Activated CD4-positive, alpha-beta memory T cell treated with anti-CD3 and anti-CD28 coated beads for 36 hours (primary cell): ENCODE measurements at regions of chr3 and their contacts with region 1.

Region 1: DNA sequence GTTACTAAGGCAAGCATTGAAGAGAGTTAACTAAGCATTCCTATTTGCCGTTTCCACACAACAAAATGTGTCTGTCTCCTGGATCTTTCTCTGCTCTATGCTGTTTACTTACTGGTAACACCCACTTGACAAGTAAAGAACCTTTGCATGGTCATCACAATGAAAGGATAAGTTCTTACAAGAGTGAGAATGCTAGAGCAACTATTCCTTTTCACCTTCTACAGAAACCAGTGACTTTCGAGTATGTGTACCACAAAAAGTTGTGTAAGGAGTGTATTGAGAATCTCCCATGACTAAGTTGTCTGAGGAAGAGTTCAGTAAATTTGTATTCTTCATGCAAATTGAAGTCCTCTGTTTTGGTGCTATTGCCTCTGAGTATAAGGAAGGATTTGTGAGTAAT is 10.8 kb downstream of the TIPARP start:
- DNase-seq: no peak
- H3K4me3 Mint-ChIP-seq: no peak overlapping the region
- H3K27ac Mint-ChIP-seq: peak overlapping the region; percentile 49
- H3K4me1 Mint-ChIP-seq: peaks cover 73% of the 10 kb centered on the region
- H3K27me3 Mint-ChIP-seq: no peaks in the 10 kb centered on the region

Region 2: DNA sequence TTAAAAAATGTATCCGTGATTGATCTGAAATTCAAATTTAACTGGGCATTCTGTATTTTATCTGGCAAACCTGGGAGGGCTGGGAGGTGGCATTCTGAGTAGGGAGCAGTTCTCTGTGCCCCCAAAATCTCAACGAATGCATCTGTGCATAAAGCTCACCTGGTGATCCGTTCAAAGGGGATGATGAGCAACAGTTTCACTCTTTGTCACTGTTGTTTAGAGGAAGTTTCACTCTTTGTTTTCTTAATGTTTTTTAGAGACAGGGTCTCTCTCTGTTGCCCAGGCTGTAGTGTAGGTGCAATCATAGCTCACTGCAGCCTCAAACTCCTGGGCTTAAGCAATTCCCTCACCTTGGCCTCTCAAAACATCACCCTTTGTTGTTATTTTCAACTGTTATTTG is 317.0 kb before region 1 on chr3:
- CTCF ChIA-PET with region 1: no interaction called
- POLR2A ChIA-PET with region 1: no interaction called
- intact Hi-C with region 1: no loop called
- DNase-seq: no peak
- H3K4me3 Mint-ChIP-seq: no peak overlapping the region
- H3K27ac Mint-ChIP-seq: no peak overlapping the region
- H3K4me1 Mint-ChIP-seq: no peaks in the 10 kb centered on the region
- H3K27me3 Mint-ChIP-seq: peaks cover 6% of the 10 kb centered on the region

Region 3: GRCh38 chr3:156723182-156723619 is 38.0 kb after region 1 on chr3:
- CTCF ChIA-PET with region 1: no interaction called
- POLR2A ChIA-PET with region 1: no interaction called
- intact Hi-C with region 1: loop called (anchors 2 kb)
- DNase-seq: peak; percentile 44
- H3K4me3 Mint-ChIP-seq: no peak overlapping the region
- H3K27ac Mint-ChIP-seq: no peak overlapping the region
- H3K4me1 Mint-ChIP-seq: peaks cover 10% of the 10 kb centered on the region
- H3K27me3 Mint-ChIP-seq: no peaks in the 10 kb centered on the region